ENCODE measurements at regions of chr10 and their contacts with region 1.

Region 1: DNA sequence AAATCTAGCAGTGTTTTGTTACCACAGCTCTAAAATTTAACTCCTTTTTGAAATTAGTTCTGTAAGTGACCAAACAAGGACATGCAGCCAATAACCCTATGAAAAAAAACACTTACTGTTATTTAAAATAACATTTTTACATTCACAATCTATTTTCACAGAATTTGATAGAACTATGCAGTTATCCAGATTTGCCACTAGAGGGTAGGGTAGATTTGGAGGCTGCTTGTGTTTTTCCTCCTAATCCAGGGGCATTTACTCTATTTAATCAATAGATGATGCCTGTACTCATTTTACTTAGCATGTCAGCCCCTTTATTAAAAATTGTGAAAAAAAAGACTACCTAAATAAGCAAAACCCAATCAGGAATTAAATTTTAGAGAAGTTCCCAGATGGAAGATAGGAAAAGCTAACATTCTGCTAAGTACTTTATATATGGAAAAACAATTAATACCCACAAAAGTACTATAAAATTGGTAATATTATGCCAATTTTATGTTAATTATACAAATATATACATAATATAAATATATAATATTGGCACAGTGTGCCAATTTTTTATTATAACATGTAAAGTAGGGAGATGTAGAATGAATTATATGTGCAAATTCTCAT is 18.1 kb upstream of the LIPK start:
- DNase-seq: peak in 1 of 2 donors; percentile 44
- ATAC-seq: peak in 2 of 3 donors; percentile 50 to 65
- H3K4me3 ChIP-seq: no peak overlapping the region
- H3K4me3 Mint-ChIP-seq: no peak overlapping the region
- H3K27ac ChIP-seq: no peak overlapping the region
- H3K27ac Mint-ChIP-seq: no peak overlapping the region
- H3K4me1 ChIP-seq: no peaks in the 10 kb centered on the region
- H3K4me1 Mint-ChIP-seq: no peaks in the 10 kb centered on the region
- H3K27me3 ChIP-seq: peaks cover 2% of the 10 kb centered on the region
- H3K27me3 Mint-ChIP-seq: peaks cover 0 to 8% of the 10 kb centered on the region in 2 donors
- CTCF ChIP-seq: peak; percentile 81

Region 2: GRCh38 chr10:88810196-88810961 is 122.4 kb after region 1 on chr10:
- intact Hi-C with region 1: loop called (anchors 5 kb)
- DNase-seq: peak in 1 of 2 donors; percentile 75
- ATAC-seq: peak; percentile 78 to 89 (median 88)
- H3K4me3 ChIP-seq: no peak overlapping the region
- H3K4me3 Mint-ChIP-seq: no peak overlapping the region
- H3K27ac ChIP-seq: no peak overlapping the region
- H3K27ac Mint-ChIP-seq: peak overlapping the region in 1 of 2 donors; percentile 1
- H3K4me1 ChIP-seq: peaks cover 3% of the 10 kb centered on the region
- H3K4me1 Mint-ChIP-seq: peaks cover 9 to 10% of the 10 kb centered on the region in 2 donors
- H3K27me3 ChIP-seq: no peaks in the 10 kb centered on the region
- H3K27me3 Mint-ChIP-seq: no peaks in the 10 kb centered on the region
- CTCF ChIP-seq: peak; percentile 65

Region 3: DNA sequence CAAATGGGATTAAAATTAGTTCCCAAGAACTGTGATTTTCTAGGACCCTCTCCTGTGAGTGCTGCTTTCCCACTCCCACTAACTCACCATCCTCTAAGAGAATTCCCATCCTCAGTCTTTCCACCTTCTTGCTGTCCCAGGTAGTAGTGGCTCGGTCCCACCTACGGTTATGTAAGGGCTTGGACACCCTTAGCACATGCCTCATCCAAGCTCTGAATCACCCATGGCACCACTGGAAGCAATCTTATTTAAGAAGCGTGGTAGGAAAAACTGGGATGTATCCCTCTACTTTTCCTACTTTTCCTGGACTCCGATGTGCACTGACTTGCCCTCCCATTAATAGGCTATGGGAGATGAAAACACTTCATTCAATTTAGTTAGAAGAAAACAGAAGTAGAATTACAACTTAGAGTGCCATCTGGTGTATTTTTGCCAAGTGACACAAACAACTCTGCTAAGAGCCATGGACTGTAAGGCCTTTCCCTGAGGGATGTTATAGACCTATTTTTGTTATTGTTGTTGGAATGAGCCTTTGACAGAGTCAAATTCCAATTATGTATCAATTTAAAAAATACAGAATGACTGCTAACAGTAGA is 177.4 kb after region 1 on chr10:
- intact Hi-C with region 1: loop called (anchors 2 kb)
- DNase-seq: peak in 1 of 2 donors; percentile 33
- ATAC-seq: no peak
- H3K4me3 ChIP-seq: no peak overlapping the region
- H3K4me3 Mint-ChIP-seq: no peak overlapping the region
- H3K27ac ChIP-seq: no peak overlapping the region
- H3K27ac Mint-ChIP-seq: no peak overlapping the region
- H3K4me1 ChIP-seq: no peaks in the 10 kb centered on the region
- H3K4me1 Mint-ChIP-seq: no peaks in the 10 kb centered on the region
- H3K27me3 ChIP-seq: no peaks in the 10 kb centered on the region
- H3K27me3 Mint-ChIP-seq: peaks cover 9 to 14% of the 10 kb centered on the region in 2 donors
- CTCF ChIP-seq: no peak

Region 4: DNA sequence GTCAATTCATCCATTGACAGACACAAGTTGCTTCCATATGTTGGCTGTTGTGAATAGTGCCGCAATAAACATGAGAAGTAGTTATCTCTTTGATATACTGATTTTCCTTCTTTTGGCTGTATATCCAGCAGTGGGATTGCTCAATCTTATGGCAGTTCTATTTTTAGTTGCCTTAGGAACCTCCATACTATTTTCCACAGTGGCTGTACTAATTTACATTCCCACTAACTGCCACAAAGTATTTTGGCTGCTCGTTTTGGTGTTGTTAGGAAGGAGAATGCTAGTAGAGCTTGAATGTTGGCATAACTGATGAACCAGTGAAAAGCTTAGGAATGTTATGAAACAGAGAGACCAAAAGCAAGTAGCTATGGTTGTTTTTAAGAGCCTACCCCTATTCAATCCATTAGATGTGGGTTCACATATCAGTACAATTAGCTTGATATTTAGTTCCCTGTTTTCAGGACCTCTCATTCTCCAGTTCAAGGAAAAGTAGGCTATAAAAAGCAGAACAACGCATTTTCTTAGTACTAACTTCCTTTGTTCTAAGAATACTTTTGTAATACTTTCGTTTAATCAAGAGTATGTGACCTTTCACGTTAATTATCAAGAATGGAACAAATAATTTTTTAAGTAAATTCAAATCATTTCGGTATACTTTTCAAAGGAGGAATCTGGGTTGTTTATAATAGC is 402.9 kb after region 1 on chr10:
- intact Hi-C with region 1: no loop called
- DNase-seq: no peak
- ATAC-seq: no peak
- H3K4me3 ChIP-seq: no peak overlapping the region
- H3K4me3 Mint-ChIP-seq: no peak overlapping the region
- H3K27ac ChIP-seq: no peak overlapping the region
- H3K27ac Mint-ChIP-seq: no peak overlapping the region
- H3K4me1 ChIP-seq: no peaks in the 10 kb centered on the region
- H3K4me1 Mint-ChIP-seq: no peaks in the 10 kb centered on the region
- H3K27me3 ChIP-seq: no peaks in the 10 kb centered on the region
- H3K27me3 Mint-ChIP-seq: peaks cover 0 to 3% of the 10 kb centered on the region in 2 donors
- CTCF ChIP-seq: no peak